Pancreas (tissue), 10 donors: ENCODE measurements at regions of chr17 and their contacts with region 1.

Region 1: DNA sequence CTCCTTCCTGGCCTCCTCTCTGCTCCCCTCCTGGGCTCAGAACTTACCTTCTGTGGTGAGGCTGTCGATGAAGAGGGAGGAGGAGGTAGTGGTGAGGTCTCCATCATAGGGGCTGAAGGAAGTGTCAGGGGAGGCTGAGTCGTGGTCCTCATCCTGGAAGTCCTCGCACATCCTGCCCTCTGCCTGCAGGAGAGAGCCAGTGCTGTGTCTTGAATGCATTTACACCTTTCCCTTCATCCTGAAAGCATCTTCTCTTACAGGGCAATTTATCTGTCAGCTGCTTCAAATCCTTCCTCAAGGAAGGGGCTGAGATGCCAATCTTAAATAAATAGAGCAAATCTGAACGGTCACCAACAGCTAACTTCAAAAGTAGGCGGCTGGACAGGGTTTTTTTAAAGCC is 73.6 kb downstream of the PLXDC1 start:
- DNase-seq: no peak
- ATAC-seq: no peak
- H3K4me3 ChIP-seq: no peak overlapping the region
- H3K27ac ChIP-seq: no peak overlapping the region
- H3K4me1 ChIP-seq: no peaks in the 10 kb centered on the region
- H3K27me3 ChIP-seq: no peaks in the 10 kb centered on the region
- CTCF ChIP-seq: no peak

Region 2: DNA sequence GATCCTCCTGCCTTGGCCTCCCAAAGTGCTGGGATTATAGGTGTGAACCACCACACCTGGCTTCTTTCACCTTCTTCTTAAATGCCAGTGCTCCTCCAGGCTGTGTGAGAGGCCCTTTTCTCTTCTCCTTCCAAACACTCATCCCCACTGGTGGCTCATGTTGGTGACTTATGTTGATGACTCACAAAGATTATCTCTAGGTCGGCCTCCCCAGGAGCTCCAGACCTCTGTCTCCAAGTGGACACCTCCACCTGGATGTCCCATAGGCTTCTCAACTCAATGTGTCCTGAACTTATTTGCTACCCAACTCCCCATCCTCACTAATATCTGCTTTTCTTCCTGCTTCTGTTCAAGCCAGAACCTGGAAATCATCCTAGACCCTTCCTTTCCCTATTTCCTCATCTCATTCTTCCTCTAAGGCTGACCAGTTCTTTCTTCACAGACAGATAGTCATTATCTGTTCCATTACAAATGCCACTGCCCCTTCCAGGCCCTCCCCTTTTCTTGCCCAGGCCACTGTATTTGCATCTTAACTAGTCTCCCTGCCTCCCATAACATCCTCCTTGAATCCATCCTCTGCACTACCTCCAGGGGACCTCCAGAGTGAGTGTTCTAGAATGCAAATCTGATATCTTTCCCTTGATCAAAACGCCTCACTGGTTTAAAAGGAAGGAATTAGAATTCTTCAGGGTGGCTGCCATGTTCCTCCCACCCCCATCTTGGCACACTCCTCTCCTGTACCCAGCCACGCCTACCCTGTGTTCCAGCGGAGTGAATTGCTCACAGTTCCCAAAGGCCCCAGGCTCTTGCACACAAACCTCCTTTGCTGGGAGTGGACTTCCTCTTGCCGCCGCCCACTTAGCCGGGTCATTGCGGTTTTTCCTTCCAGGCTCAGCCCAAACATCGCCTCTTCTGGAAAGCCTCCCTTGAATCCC is 75.9 kb before region 1 on chr17:
- intact Hi-C with region 1: loop called in 1 of 3 experiments (anchors 10 kb)
- DNase-seq: peak in 3 of 6 donors; percentile 15 to 53 (median 33)
- ATAC-seq: peak in 3 of 4 donors; percentile 76 to 90 (median 82)
- H3K4me3 ChIP-seq: no peak overlapping the region
- H3K27ac ChIP-seq: peak overlapping the region in 3 of 4 donors; percentile 33 to 47 (median 38)
- H3K4me1 ChIP-seq: no peaks in the 10 kb centered on the region
- H3K27me3 ChIP-seq: no peaks in the 10 kb centered on the region
- CTCF ChIP-seq: no peak